SK-N-SH (cell line): ENCODE measurements at regions of chr20 and their contacts with region 1.

Region 1: DNA sequence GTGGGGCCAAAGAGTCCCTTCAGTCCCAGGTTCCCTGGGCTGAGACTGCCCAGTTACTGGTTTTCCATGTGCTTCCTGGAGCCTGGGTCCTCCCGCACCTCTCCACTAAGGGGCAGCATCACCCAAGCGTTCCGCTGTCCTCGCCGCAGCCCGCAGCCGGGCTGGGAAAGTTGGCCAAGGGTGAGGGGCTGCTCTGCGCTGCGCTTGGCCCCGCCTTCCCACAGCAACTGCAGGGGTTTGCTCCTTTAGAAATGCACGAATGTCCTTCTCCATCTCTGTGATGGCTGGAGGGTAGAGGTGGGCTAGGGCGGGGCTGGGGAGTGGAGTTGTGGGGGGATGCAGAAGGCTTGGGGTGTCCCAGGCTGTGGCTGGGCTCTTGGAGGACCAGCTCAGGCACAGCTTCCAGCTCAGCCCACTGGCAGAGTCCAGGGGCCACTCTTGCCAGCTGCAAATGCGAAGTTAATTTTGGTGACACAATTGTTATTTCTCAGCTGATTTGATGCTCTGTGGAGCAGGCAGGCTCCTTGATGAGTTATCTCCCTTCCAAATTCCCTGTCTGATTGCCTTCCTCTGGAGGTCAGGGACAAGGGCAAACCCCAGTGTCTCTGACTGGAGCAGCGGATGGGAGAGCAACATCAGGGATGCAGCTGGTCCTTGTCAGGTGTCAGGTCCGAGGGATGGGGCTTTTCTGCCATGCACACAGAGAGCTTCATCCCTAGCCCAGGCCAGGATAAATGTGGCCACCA is 63.2 kb downstream of the NOL4L start:
- DNase-seq: peak; percentile 85
- H3K4me3 ChIP-seq: peak overlapping the region in 1 of 2 experiments; percentile 58; a peak in 1 of 4 replicates
- H3K27ac ChIP-seq: peak overlapping the region in 1 of 2 experiments; percentile 96; a peak in 2 of 4 replicates
- H3K4me1 ChIP-seq: peaks cover 0 to 77% of the 10 kb centered on the region in 2 experiments; a peak in 3 of 4 replicates
- H3K27me3 ChIP-seq: no peaks in the 10 kb centered on the region
- CTCF ChIP-seq: peak; percentile 84
- EP300 ChIP-seq: no peak
- RAD21 ChIP-seq: peak; percentile 98

Region 2: GRCh38 chr20:32509639-32510066 is 12.3 kb before region 1 on chr20:
- CTCF ChIA-PET with region 1: interaction called, 16 read pairs
- POLR2A ChIA-PET with region 1: no interaction called
- DNase-seq: peak; percentile 75
- H3K4me3 ChIP-seq: no peak overlapping the region
- H3K27ac ChIP-seq: peak overlapping the region in 1 of 2 experiments; percentile 75; a peak in 2 of 4 replicates
- H3K4me1 ChIP-seq: peaks cover 0 to 44% of the 10 kb centered on the region in 2 experiments; a peak in 1 of 4 replicates
- H3K27me3 ChIP-seq: no peaks in the 10 kb centered on the region
- CTCF ChIP-seq: peak; percentile 60
- EP300 ChIP-seq: peak in 1 of 2 experiments; percentile 51; a peak in 2 of 4 replicates
- RAD21 ChIP-seq: peak; percentile 69

Region 3: GRCh38 chr20:32558526-32558925 is 36.6 kb after region 1 on chr20:
- CTCF ChIA-PET with region 1: interaction called, 12 read pairs
- POLR2A ChIA-PET with region 1: no interaction called
- DNase-seq: no peak
- H3K4me3 ChIP-seq: no peak overlapping the region
- H3K27ac ChIP-seq: no peak overlapping the region
- H3K4me1 ChIP-seq: peaks cover 0 to 14% of the 10 kb centered on the region in 2 experiments; a peak in 1 of 4 replicates
- H3K27me3 ChIP-seq: no peaks in the 10 kb centered on the region
- CTCF ChIP-seq: no peak
- EP300 ChIP-seq: no peak
- RAD21 ChIP-seq: no peak

Region 4: GRCh38 chr20:32582659-32583580 is 61.0 kb after region 1 on chr20:
- CTCF ChIA-PET with region 1: interaction called, 29 read pairs
- POLR2A ChIA-PET with region 1: interaction called, 5 read pairs
- DNase-seq: peak; percentile 84
- H3K4me3 ChIP-seq: peak overlapping the region; percentile 46 to 60; a peak in 3 of 4 replicates
- H3K27ac ChIP-seq: peak overlapping the region in 1 of 2 experiments; percentile 81; a peak in 2 of 4 replicates
- H3K4me1 ChIP-seq: peaks cover 0 to 25% of the 10 kb centered on the region in 2 experiments; a peak in 1 of 4 replicates
- H3K27me3 ChIP-seq: peaks cover 15% of the 10 kb centered on the region; the same call in 1 of the 2 replicates
- CTCF ChIP-seq: no peak
- EP300 ChIP-seq: no peak
- RAD21 ChIP-seq: no peak

Region 5: GRCh38 chr20:32652739-32653526 is 131.0 kb after region 1 on chr20:
- CTCF ChIA-PET with region 1: interaction called, 326 read pairs
- POLR2A ChIA-PET with region 1: interaction called, 19 read pairs
- DNase-seq: peak; percentile 91
- H3K4me3 ChIP-seq: peak overlapping the region in 1 of 2 experiments; percentile 60; a peak in 1 of 4 replicates
- H3K27ac ChIP-seq: peak overlapping the region in 1 of 2 experiments; percentile 24; a peak in 1 of 4 replicates
- H3K4me1 ChIP-seq: peaks cover 0 to 5% of the 10 kb centered on the region in 2 experiments; a peak in 1 of 4 replicates
- H3K27me3 ChIP-seq: no peaks in the 10 kb centered on the region
- CTCF ChIP-seq: peak; percentile 93
- EP300 ChIP-seq: no peak
- RAD21 ChIP-seq: peak; percentile 99